Activated T-helper 2 cell treated with anti-CD3 and anti-CD28 coated beads, Interferon-gamma antibody, Interleukin-2, Interleukin-4, amounts not matched to agents 10 μg/mL and 5 μg/mL and 100 μg/mL, durations not matched to agents 14 hours and 24 hours and 36 hours (primary cell): ENCODE measurements at regions of chr15 and their contacts with region 1.

Region 1: GRCh38 chr15:100596792-100597191 is 5.2 kb downstream of the LINS1 start:
- DNase-seq: peak; percentile 92
- H3K4me3 Mint-ChIP-seq: peak overlapping the region; percentile 83
- H3K27ac Mint-ChIP-seq: peak overlapping the region; percentile 97
- H3K4me1 Mint-ChIP-seq: peaks cover 59% of the 10 kb centered on the region
- H3K27me3 Mint-ChIP-seq: no peaks in the 10 kb centered on the region

Region 2: DNA sequence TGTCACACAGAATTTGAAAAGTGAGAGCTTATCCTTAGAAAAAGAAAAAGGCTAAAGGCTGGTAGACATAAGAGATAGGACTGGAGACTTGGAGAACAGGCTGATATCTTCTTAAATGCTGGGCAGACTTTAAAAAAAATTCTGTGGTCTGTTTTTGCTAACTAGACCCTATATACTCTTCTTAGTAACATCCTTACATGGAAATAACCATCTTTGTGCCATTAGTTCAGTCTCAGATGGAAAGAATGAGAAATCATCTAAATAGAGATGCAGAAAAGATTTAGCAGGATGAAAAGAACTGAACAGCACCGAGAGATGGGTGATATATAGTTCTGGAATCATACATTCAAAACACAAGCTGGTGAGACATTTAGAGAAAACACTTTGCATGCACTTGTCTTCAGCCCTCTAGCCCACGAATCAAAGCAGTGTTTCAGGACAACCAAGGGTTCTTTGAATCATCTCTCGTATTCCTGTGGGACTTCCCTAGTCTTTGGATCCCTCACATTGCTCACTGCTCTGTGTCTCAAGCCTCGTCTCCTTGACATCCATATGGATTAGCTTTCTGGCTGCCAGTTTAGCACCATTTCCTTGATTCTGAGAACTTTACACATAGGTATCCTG is 770.5 kb before region 1 on chr15:
- intact Hi-C with region 1: loop called (anchors 10 kb)
- DNase-seq: no peak
- H3K4me3 Mint-ChIP-seq: no peak overlapping the region
- H3K27ac Mint-ChIP-seq: peak overlapping the region; percentile 76
- H3K4me1 Mint-ChIP-seq: peaks cover 18% of the 10 kb centered on the region
- H3K27me3 Mint-ChIP-seq: no peaks in the 10 kb centered on the region

Region 3: DNA sequence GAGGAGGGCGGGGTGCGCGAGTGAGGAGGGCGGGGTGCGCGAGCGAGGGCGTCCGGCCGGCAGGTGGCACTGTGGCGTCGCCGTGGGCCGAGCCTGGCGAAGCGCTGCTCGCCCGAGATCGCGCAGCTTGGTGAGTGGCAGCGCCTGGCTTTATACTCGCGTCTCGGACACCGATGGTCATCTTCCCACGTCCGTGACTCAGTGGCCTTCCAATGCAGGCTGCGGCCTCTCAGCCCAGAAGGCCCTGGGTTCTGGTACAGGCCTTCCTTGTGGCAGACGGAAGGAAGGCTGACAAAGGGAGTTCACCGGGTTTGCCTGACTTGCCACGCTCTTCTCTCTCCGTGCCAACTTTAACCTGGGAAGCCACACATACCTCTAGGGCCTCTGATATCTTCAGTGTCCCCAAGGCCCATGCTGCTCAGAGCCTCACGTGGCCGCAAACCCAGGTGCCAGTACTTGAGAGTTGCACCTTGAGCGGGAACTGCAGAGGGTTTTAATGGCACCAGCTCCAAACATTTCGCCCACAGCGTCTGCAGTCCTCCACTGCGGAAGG is 668.3 kb before region 1 on chr15:
- intact Hi-C with region 1: loop called (anchors 5 kb)
- DNase-seq: peak; percentile 81
- H3K4me3 Mint-ChIP-seq: peak overlapping the region; percentile 84
- H3K27ac Mint-ChIP-seq: peak overlapping the region; percentile 70
- H3K4me1 Mint-ChIP-seq: peaks cover 14% of the 10 kb centered on the region
- H3K27me3 Mint-ChIP-seq: peaks cover 24% of the 10 kb centered on the region

Region 4: DNA sequence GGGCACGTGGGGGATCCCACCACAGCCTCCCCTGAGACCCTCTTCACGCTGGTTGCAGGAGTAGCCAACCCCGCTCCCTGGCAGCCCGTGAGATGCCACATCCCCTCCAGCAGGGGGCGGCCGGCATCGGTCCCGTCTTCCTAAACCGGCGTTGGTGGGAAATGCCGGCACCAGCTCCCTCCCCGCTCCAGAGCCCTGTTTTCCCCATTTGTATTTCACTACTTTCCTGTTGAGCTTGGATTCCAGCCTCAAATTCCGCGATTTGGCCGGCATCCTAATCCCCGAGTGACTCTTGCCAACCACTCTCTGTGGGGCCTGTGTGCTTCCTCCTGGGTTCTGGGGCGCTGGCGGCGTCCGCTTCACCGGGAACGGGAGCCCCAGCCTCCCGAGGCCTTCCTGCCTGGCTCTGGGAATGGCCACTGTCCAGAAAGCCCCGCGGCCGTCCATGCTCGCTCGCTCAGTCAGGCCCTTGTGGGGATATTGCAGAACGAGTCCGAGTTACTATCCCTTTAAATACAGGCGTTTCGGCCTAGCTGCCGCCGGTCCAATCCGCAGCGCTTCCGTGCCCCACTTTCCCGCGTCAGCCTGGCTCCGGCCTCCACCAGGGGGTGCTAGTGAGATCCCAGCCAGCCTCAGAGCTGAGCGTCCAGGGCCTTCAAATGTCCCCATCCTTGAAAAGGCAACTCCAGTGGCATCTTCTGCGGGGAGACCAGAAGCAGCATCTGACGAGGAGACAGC is 246.9 kb before region 1 on chr15:
- intact Hi-C with region 1: loop called (anchors 2 kb)
- DNase-seq: peak; percentile 83
- H3K4me3 Mint-ChIP-seq: peak overlapping the region; percentile 86
- H3K27ac Mint-ChIP-seq: peak overlapping the region; percentile 47
- H3K4me1 Mint-ChIP-seq: peaks cover 4% of the 10 kb centered on the region
- H3K27me3 Mint-ChIP-seq: peaks cover 21% of the 10 kb centered on the region

Region 5: GRCh38 chr15:100472736-100473135 is 124.1 kb before region 1 on chr15:
- intact Hi-C with region 1: no loop called
- DNase-seq: no peak
- H3K4me3 Mint-ChIP-seq: no peak overlapping the region
- H3K27ac Mint-ChIP-seq: no peak overlapping the region
- H3K4me1 Mint-ChIP-seq: no peaks in the 10 kb centered on the region
- H3K27me3 Mint-ChIP-seq: no peaks in the 10 kb centered on the region

Region 6: DNA sequence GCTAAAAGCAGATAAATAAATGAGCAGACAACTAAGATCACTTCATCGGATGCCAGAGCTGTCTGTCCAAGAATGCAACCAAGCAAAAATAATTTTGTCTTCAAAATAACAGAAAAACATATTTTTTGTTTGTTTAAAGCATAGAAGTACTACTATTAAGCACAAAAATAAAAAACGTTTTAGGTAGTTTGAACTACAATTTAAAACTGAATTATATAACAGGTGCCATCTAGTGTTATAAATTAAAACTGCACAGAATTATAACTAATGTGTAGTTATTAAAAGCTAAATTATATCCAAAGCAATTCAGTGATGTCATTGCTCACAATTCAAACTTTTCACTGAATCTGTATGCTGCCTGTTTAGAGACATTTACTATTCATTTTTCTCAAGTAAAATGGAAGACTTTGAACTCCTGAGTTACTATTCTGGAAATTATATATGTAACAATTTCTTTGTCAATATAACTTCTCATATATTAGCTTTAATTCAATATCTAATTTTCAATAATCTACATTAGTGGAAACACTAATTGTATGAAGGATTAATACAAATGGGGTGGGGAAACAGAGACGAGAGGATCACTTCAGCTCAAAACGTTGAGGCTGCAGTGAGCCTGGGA is 24.3 kb before region 1 on chr15:
- intact Hi-C with region 1: loop called (anchors 2 kb)
- DNase-seq: no peak
- H3K4me3 Mint-ChIP-seq: no peak overlapping the region
- H3K27ac Mint-ChIP-seq: no peak overlapping the region
- H3K4me1 Mint-ChIP-seq: peaks cover 33% of the 10 kb centered on the region
- H3K27me3 Mint-ChIP-seq: no peaks in the 10 kb centered on the region